ENCODE measurements at regions of chr17 and their contacts with region 1.

Region 1: DNA sequence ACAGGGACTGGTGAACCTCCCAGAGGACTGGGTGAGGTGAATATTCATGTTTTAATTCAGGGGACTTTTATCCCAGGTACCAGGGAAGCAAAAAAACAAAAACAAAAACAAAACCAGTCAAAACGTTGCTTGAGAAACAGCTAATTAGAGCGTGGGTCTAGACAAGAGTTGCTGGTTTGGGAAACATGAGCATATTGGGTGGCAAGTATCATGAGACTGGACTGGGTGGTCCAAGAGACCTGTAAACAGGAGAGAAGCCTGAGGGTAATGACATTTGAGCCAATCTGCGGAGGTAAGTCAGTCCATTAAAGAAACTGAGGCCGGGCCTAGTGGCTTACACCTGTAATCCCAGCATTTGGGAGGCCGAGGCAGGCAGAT is 11.5 kb upstream of the BPTF start:
- DNase-seq: no peak
- H3K4me3 ChIP-seq: no peak overlapping the region
- H3K27me3 ChIP-seq: peaks cover 3% of the 10 kb centered on the region; the same call in 1 of the 2 replicates
- CTCF ChIP-seq: no peak

Region 2: DNA sequence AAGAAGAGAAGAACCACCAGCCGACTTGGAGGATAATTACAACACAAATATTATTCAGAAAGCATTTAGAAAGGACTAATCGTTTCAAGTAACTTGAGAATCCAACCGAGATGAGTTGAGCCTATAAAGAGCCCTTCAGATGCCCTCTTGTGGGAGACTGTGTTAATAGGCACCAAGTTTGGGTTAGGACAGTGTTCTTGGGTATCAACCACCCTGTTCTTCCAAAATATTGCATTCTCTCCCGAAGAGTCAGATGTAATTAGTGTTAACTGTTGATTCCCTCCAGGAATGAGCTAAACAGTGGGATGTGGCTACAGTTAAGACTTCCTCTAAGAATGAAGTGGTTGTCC is 183.8 kb before region 1 on chr17:
- CTCF ChIA-PET with region 1: no interaction called
- POLR2A ChIA-PET with region 1: no interaction called
- DNase-seq: peak; percentile 17
- H3K4me3 ChIP-seq: no peak overlapping the region
- H3K27me3 ChIP-seq: no peaks in the 10 kb centered on the region
- CTCF ChIP-seq: peak; percentile 66

Region 3: GRCh38 chr17:67718330-67718941 is 95.4 kb before region 1 on chr17:
- CTCF ChIA-PET with region 1: no interaction called
- POLR2A ChIA-PET with region 1: no interaction called
- DNase-seq: no peak
- H3K4me3 ChIP-seq: peak overlapping the region; percentile 71
- H3K27me3 ChIP-seq: no peaks in the 10 kb centered on the region
- CTCF ChIP-seq: no peak

Region 4: GRCh38 chr17:67824735-67825626 is 11.2 kb after region 1 on chr17 and contains the start of gene BPTF:
- CTCF ChIA-PET with region 1: interaction called, 12 read pairs
- POLR2A ChIA-PET with region 1: no interaction called
- DNase-seq: peak; percentile 19
- H3K4me3 ChIP-seq: peak within 1 kb of the TSS; percentile 59
- H3K27me3 ChIP-seq: no peaks in the 10 kb centered on the region
- CTCF ChIP-seq: peak; percentile 54
- polyA plus RNA-seq, gene BPTF: 25.6 and 34.8 TPM in 2 replicates

Measured in BJ (cell line).